Mammary epithelial cell (primary cell): ENCODE measurements at regions of chr10 and their contacts with region 1.

Region 1: DNA sequence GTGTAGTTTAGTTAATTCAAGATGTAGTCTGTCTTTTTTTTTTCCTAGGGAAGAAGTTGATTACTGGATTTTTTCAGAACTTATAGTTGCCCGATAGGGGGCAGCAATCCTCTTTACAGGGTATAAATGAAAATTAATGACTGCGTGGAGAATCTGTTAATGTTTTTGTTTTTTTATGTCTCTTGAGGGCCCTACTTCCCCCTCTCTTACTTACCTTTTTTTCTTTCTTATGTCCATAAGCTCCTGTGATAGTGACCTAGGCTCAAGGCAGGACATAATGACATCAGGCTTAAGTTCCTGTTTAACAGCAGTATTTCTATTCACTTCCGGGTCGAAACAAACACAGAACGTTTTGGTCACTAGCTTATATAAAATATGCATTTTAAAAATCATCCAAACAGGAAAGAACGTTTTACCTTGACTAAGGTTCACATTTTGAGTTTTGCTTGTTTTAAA is 18.8 kb downstream of the CDC123 start:
- DNase-seq: peak; percentile 13
- H3K4me3 ChIP-seq: no peak overlapping the region
- H3K27ac ChIP-seq: no peak overlapping the region
- H3K4me1 ChIP-seq: no peaks in the 10 kb centered on the region
- H3K27me3 ChIP-seq: no peaks in the 10 kb centered on the region
- CTCF ChIP-seq: peak; percentile 57 to 61

Region 2: GRCh38 chr10:11782793-11783557 is 431.8 kb before region 1 on chr10:
- CTCF ChIA-PET with region 1: no interaction called
- dilution Hi-C with region 1: no loop called
- in situ Hi-C with region 1: no loop called
- intact Hi-C with region 1: no loop called
- DNase-seq: peak; percentile 52
- H3K4me3 ChIP-seq: no peak overlapping the region
- H3K27ac ChIP-seq: no peak overlapping the region
- H3K4me1 ChIP-seq: no peaks in the 10 kb centered on the region
- H3K27me3 ChIP-seq: no peaks in the 10 kb centered on the region
- CTCF ChIP-seq: peak; percentile 64 to 73

Region 3: GRCh38 chr10:12656518-12657142 is 441.8 kb after region 1 on chr10:
- CTCF ChIA-PET with region 1: no interaction called
- dilution Hi-C with region 1: no loop called
- in situ Hi-C with region 1: no loop called
- intact Hi-C with region 1: loop called (anchors 5 kb)
- DNase-seq: peak; percentile 39
- H3K4me3 ChIP-seq: no peak overlapping the region
- H3K27ac ChIP-seq: no peak overlapping the region
- H3K4me1 ChIP-seq: no peaks in the 10 kb centered on the region
- H3K27me3 ChIP-seq: no peaks in the 10 kb centered on the region
- CTCF ChIP-seq: peak; percentile 69 to 81